PC-9 (cell line): ENCODE measurements at regions of chr19 and their contacts with region 1.

Region 1: GRCh38 chr19:51166846-51167490 is 24.9 kb downstream of the SIGLEC7 start:
- DNase-seq: no peak
- H3K4me3 ChIP-seq: no peak overlapping the region
- H3K27ac ChIP-seq: no peak overlapping the region
- H3K4me1 ChIP-seq: no peaks in the 10 kb centered on the region
- H3K27me3 ChIP-seq: peaks cover 81% of the 10 kb centered on the region
- CTCF ChIP-seq: no peak

Region 2: GRCh38 chr19:50537762-50538230 is 629.2 kb before region 1 on chr19:
- CTCF ChIA-PET with region 1: no interaction called
- POLR2A ChIA-PET with region 1: no interaction called
- intact Hi-C with region 1: loop called (anchors 2 kb)
- DNase-seq: peak; percentile 66 to 79
- H3K4me3 ChIP-seq: no peak overlapping the region
- H3K27ac ChIP-seq: no peak overlapping the region
- H3K4me1 ChIP-seq: no peaks in the 10 kb centered on the region
- H3K27me3 ChIP-seq: peaks cover 71% of the 10 kb centered on the region
- CTCF ChIP-seq: peak; percentile 86

Region 3: DNA sequence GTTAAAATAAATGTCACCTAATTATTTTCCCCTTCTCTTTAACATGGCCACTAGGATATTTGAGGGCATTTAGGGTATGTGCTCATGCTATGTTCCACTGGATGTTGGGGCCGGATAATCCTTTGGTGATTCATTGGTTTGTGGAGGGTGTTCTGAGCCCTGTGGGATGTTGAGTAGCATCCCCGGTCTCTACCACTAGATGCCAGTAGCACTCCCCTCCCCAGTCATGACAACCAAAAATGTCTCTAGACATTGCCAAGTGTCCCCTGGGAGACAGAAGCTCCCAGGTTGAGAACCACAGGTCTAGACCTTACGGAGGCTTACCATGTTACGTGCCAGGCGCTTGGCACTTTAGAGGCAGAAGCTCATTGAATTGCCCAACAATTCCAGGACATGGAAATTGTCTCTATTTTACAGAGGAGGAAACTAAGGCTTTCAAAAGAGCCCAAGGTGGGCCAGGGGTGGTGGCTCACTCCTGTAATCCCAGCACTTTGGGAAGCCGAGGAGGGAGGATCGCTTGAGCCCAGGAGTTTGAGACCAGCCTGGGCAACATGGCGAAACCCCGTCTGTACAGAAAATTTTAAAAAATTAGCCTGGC is 461.4 kb before region 1 on chr19:
- CTCF ChIA-PET with region 1: no interaction called
- POLR2A ChIA-PET with region 1: no interaction called
- intact Hi-C with region 1: loop called (anchors 1 kb)
- DNase-seq: peak; percentile 49 to 55
- H3K4me3 ChIP-seq: no peak overlapping the region
- H3K27ac ChIP-seq: no peak overlapping the region
- H3K4me1 ChIP-seq: no peaks in the 10 kb centered on the region
- H3K27me3 ChIP-seq: peaks cover 91% of the 10 kb centered on the region
- CTCF ChIP-seq: peak; percentile 75

Region 4: DNA sequence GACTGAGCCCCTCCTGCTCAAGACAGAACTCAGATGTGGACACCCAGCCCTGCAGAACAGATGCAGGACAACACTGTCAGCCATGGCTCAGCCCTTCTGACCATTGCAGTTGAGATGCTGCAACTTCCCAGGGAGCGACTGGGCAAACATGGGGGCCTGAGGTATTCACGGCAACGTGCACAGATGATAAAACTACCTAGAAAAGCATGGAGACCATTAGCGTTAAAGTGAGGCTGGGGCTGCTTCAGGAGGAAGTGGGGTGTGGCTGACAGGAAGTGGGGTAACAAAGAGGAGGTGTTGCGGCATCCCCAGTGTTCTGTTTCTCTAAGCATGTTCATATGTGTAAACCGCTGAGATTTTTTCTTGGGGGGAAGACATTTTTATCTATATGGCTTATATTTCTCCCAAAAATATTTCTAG is 43.6 kb before region 1 on chr19:
- CTCF ChIA-PET with region 1: no interaction called
- POLR2A ChIA-PET with region 1: no interaction called
- intact Hi-C with region 1: no loop called
- DNase-seq: no peak
- H3K4me3 ChIP-seq: no peak overlapping the region
- H3K27ac ChIP-seq: no peak overlapping the region
- H3K4me1 ChIP-seq: no peaks in the 10 kb centered on the region
- H3K27me3 ChIP-seq: peaks cover 97% of the 10 kb centered on the region
- CTCF ChIP-seq: no peak

Region 5: GRCh38 chr19:51259348-51260245 is 92.6 kb after region 1 on chr19:
- CTCF ChIA-PET with region 1: no interaction called
- POLR2A ChIA-PET with region 1: no interaction called
- intact Hi-C with region 1: no loop called
- DNase-seq: peak in 1 of 2 experiments; percentile 30
- H3K4me3 ChIP-seq: no peak overlapping the region
- H3K27ac ChIP-seq: no peak overlapping the region
- H3K4me1 ChIP-seq: no peaks in the 10 kb centered on the region
- H3K27me3 ChIP-seq: peaks cover 87% of the 10 kb centered on the region
- CTCF ChIP-seq: peak; percentile 77